ENCODE measurements at regions of chr16 and their contacts with region 1.

Region 1: DNA sequence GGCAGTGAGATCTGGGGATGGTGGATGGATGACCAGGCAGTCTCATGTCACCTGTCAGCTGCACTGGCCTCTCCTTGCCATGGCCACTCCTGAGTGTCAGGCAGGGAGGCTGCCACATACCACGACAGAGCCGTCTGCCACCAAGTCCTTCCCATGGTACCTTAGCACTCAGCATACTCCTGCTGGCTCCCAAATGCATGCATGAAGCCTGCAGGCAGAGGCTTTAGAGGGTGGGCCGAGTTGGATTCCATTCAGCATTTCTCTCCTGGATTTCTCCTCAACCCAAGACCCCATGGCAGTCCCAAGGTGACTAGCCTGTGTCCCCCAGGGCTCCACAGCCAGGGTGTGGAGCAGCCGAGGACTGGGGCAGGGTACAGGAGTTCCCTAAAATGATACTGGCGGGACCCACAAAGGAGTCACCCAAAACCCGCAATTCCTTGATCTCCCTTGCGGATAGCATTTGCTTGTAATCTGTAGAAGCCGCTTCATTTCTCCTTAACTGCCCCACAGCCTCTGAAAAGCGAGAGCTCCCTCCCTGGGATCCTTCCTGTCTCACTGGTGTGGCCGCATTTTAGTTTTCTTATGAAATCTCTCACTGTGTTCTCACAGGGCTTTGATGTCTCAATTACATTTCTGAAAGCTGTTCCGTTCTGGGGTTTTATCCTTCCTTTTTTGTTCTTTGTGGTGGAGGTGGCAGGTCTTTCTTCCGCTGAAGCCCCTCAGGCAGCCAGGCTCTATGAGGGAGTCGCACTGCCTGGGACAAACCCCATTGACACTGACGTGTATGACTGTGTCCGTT is 141.4 kb downstream of the SOCS1 start:
- DNase-seq: peak; percentile 71
- H3K4me3 Mint-ChIP-seq: peak overlapping the region; percentile 60
- H3K27ac Mint-ChIP-seq: peak overlapping the region; percentile 88
- H3K4me1 Mint-ChIP-seq: peaks cover 73% of the 10 kb centered on the region
- H3K27me3 Mint-ChIP-seq: no peaks in the 10 kb centered on the region

Region 2: GRCh38 chr16:10080036-10080772 is 1034.4 kb before region 1 on chr16:
- CTCF ChIA-PET with region 1: no interaction called
- POLR2A ChIA-PET with region 1: no interaction called
- intact Hi-C with region 1: no loop called
- DNase-seq: no peak
- H3K4me3 Mint-ChIP-seq: no peak overlapping the region
- H3K27ac Mint-ChIP-seq: no peak overlapping the region
- H3K4me1 Mint-ChIP-seq: no peaks in the 10 kb centered on the region
- H3K27me3 Mint-ChIP-seq: no peaks in the 10 kb centered on the region

Region 3: GRCh38 chr16:11076259-11077018 is 38.1 kb before region 1 on chr16:
- CTCF ChIA-PET with region 1: no interaction called
- POLR2A ChIA-PET with region 1: interaction called, 3 read pairs
- intact Hi-C with region 1: loop called (anchors 5 kb)
- DNase-seq: peak; percentile 88
- H3K4me3 Mint-ChIP-seq: no peak overlapping the region
- H3K27ac Mint-ChIP-seq: peak overlapping the region; percentile 94
- H3K4me1 Mint-ChIP-seq: peaks cover 96% of the 10 kb centered on the region
- H3K27me3 Mint-ChIP-seq: no peaks in the 10 kb centered on the region

Region 4: GRCh38 chr16:11152677-11153331 is 38.2 kb after region 1 on chr16:
- CTCF ChIA-PET with region 1: no interaction called
- POLR2A ChIA-PET with region 1: no interaction called
- intact Hi-C with region 1: no loop called
- DNase-seq: no peak
- H3K4me3 Mint-ChIP-seq: no peak overlapping the region
- H3K27ac Mint-ChIP-seq: no peak overlapping the region
- H3K4me1 Mint-ChIP-seq: peaks cover 19% of the 10 kb centered on the region
- H3K27me3 Mint-ChIP-seq: no peaks in the 10 kb centered on the region

Region 5: GRCh38 chr16:11164482-11165270 is 50.1 kb after region 1 on chr16:
- CTCF ChIA-PET with region 1: interaction called, 3 read pairs
- POLR2A ChIA-PET with region 1: interaction called, 12 read pairs
- intact Hi-C with region 1: no loop called
- DNase-seq: no peak
- H3K4me3 Mint-ChIP-seq: no peak overlapping the region
- H3K27ac Mint-ChIP-seq: peak overlapping the region; percentile 24
- H3K4me1 Mint-ChIP-seq: peaks cover 26% of the 10 kb centered on the region
- H3K27me3 Mint-ChIP-seq: no peaks in the 10 kb centered on the region

Region 6: GRCh38 chr16:11328172-11329070 is 213.9 kb after region 1 on chr16:
- CTCF ChIA-PET with region 1: no interaction called
- POLR2A ChIA-PET with region 1: no interaction called
- intact Hi-C with region 1: no loop called
- DNase-seq: peak; percentile 74
- H3K4me3 Mint-ChIP-seq: peak overlapping the region; percentile 36
- H3K27ac Mint-ChIP-seq: peak overlapping the region; percentile 53
- H3K4me1 Mint-ChIP-seq: peaks cover 52% of the 10 kb centered on the region
- H3K27me3 Mint-ChIP-seq: no peaks in the 10 kb centered on the region